ENCODE measurements at regions of chr1 and their contacts with region 1.

Region 1: GRCh38 chr1:43414634-43415223 is 25.0 kb downstream of the SZT2 start:
- DNase-seq: peak; percentile 72
- H3K4me3 ChIP-seq: no peak overlapping the region; a peak in 1 of 4 replicates
- H3K27ac ChIP-seq: no peak overlapping the region
- H3K4me1 ChIP-seq: no peaks in the 10 kb centered on the region
- H3K27me3 ChIP-seq: no peaks in the 10 kb centered on the region
- CTCF ChIP-seq: peak; percentile 73
- EP300 ChIP-seq: no peak
- RAD21 ChIP-seq: peak; percentile 74

Region 2: GRCh38 chr1:43238085-43238484 is 176.6 kb before region 1 on chr1:
- CTCF ChIA-PET with region 1: interaction called, 17 read pairs
- POLR2A ChIA-PET with region 1: no interaction called
- DNase-seq: peak; percentile 51
- H3K4me3 ChIP-seq: no peak overlapping the region; a peak in 1 of 4 replicates
- H3K27ac ChIP-seq: no peak overlapping the region
- H3K4me1 ChIP-seq: peaks cover 0 to 6% of the 10 kb centered on the region in 2 experiments; a peak in 1 of 4 replicates
- H3K27me3 ChIP-seq: no peaks in the 10 kb centered on the region
- CTCF ChIP-seq: peak; percentile 60
- EP300 ChIP-seq: no peak
- RAD21 ChIP-seq: peak; percentile 76

Region 3: GRCh38 chr1:43389326-43390313 is 25.1 kb before region 1 on chr1 and contains the starts of genes MED8 and SZT2:
- CTCF ChIA-PET with region 1: interaction called, 10 read pairs
- POLR2A ChIA-PET with region 1: no interaction called
- DNase-seq: peak; percentile 97
- H3K4me3 ChIP-seq: peak within 1 kb of the TSS; percentile 82 to 83
- H3K27ac ChIP-seq: peak within 1 kb of the TSS; percentile 72 to 79; a peak in 3 of 4 replicates
- H3K4me1 ChIP-seq: peaks cover 15 to 19% of the 10 kb centered on the region in 2 experiments; a peak in 3 of 4 replicates
- H3K27me3 ChIP-seq: no peaks in the 10 kb centered on the region
- CTCF ChIP-seq: no peak
- EP300 ChIP-seq: no peak
- RAD21 ChIP-seq: no peak
- polyA plus RNA-seq, gene MED8: 33.7 and 42.9 TPM in 2 replicates
- polyA plus RNA-seq, gene SZT2: 11.1 and 12.9 TPM in 2 replicates

Region 4: GRCh38 chr1:43783671-43784205 is 369.0 kb after region 1 on chr1:
- CTCF ChIA-PET with region 1: no interaction called
- POLR2A ChIA-PET with region 1: no interaction called
- DNase-seq: no peak
- H3K4me3 ChIP-seq: no peak overlapping the region
- H3K27ac ChIP-seq: no peak overlapping the region; a peak in 2 of 4 replicates
- H3K4me1 ChIP-seq: peaks cover 5 to 32% of the 10 kb centered on the region in 2 experiments; a peak in 3 of 4 replicates
- H3K27me3 ChIP-seq: no peaks in the 10 kb centered on the region
- CTCF ChIP-seq: no peak
- EP300 ChIP-seq: no peak
- RAD21 ChIP-seq: no peak

Measured in SK-N-SH (cell line).